Spleen (tissue), 13 donors: ENCODE measurements at regions of chr15 and their contacts with region 1.

Region 1: DNA sequence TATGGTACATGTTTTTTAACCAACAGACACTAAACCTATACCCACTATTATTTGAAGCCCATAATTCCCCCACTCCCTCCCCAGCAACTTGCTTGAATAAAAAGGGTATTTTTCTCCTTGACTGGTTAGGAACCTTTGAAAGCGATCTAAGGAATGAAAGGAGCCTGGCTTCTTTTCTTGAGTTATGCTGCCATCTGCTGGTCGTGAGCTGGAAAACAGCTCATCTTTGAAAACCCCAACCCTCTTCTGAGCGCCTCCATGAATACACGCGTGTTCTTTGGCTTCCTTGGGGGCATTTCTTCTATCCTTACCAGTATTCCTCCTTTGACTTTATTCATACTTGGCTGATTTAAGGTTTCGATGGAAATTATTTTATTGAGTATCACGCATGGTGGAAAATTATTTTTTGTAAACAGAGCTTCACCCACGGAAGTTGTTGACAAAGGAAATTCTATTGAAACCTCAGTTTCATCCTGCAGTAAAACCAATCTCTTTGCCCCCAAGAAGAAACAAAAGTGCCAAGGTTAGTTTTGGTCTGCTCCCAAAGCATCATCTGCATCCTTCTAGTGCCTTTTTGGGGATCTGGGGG is 171.6 kb downstream of the SV2B start:
- DNase-seq: no peak
- H3K4me3 ChIP-seq: no peak overlapping the region
- H3K27ac ChIP-seq: no peak overlapping the region
- H3K4me1 ChIP-seq: peaks cover 0 to 7% (median 6%) of the 10 kb centered on the region in 6 donors
- H3K27me3 ChIP-seq: peaks cover 0 to 34% (median 0%) of the 10 kb centered on the region in 7 donors
- CTCF ChIP-seq: peak; percentile 46 to 90 (median 79)
- POLR2A ChIP-seq: no peak

Region 2: GRCh38 chr15:90959894-90960293 is 311.8 kb before region 1 on chr15:
- intact Hi-C with region 1: loop called (anchors 10 kb)
- DNase-seq: no peak
- H3K4me3 ChIP-seq: no peak overlapping the region
- H3K27ac ChIP-seq: no peak overlapping the region
- H3K4me1 ChIP-seq: peaks cover 14 to 29% (median 24%) of the 10 kb centered on the region in 6 donors
- H3K27me3 ChIP-seq: no peaks in the 10 kb centered on the region
- CTCF ChIP-seq: no peak
- POLR2A ChIP-seq: no peak

Region 3: DNA sequence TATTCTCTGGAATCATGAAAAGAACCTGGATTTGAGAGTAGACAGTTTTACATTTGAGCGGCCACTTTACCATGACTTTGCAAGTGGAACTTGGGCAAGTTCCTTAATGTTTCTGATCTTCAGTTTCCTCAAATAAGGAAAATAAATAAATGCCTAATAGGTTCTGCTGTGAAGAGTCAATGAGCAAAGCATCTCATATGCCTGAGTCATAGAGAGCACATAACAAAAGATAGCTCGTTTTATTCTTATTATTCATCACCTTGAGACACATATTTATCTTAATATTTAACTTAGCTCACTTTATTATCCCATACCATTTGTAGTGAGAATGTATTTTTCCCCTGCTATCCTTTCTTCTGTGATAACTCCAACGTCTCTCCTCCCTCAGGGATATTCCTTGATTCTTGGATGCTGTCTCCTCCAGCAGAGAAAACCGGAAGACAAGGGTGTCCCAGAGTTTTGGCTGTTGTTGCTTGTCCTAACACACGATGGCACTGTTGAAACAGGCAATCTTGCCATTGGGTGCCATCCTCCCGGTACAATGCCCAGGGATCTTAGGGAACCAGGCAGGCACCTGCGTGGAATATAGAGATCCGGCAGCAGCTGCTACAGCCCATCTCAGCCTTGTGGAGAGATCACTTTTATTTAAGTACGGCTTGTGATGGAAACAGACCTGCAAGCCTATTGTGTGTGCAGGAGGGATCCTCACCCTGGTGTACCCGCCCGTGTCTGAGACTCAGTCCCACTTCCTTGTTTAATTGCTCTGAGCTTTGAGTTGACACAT is 215.9 kb before region 1 on chr15:
- intact Hi-C with region 1: loop called (anchors 5 kb)
- DNase-seq: no peak
- H3K4me3 ChIP-seq: no peak overlapping the region
- H3K27ac ChIP-seq: no peak overlapping the region
- H3K4me1 ChIP-seq: peaks cover 0 to 6% (median 0%) of the 10 kb centered on the region in 6 donors
- H3K27me3 ChIP-seq: peaks cover 0 to 82% (median 43%) of the 10 kb centered on the region in 7 donors
- CTCF ChIP-seq: peak in 10 of 11 experiments; percentile 19 to 74 (median 62)
- POLR2A ChIP-seq: no peak

Region 4: DNA sequence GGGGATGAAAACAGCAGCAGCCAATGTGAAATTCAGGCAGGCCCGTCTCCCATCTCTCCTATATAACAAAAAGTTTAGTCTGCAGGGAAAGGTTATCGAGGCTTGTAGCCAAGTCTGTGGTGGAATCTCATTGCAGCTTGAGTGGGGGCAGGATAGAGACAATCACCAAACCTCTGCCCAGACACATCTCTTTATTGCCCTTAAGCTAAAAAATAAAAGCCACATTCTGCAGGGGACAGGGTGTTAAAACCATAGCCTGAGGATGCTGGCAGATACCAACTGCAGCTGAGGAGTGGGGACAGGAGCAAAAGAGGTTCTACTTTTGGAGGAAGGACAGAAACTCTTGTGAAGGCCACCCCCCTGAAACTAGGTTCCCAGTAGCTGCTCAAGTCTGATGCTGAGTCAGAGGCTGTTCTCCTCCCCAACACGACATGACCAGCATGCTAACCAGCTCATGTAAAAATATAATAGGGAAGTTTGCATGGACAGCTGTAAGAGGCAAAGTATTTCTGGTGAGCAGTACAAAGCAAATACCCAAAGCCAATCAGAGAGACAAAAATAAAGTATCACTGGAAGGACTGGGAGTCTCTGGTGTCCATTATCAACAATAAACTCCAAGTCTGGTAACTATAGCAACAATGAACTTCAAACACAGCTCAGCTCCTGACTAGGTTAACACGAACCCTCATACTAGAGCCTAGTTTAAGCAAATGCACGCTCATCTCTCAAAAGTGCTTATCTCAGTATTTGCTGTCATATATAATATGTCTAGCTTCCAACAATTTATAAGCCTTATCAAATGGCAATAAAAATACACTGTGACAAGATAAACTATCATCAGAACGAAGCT is 219.7 kb after region 1 on chr15:
- intact Hi-C with region 1: no loop called
- DNase-seq: no peak
- H3K4me3 ChIP-seq: no peak overlapping the region
- H3K27ac ChIP-seq: no peak overlapping the region
- H3K4me1 ChIP-seq: no peaks in the 10 kb centered on the region
- H3K27me3 ChIP-seq: peaks cover 0 to 3% (median 0%) of the 10 kb centered on the region in 7 donors
- CTCF ChIP-seq: no peak
- POLR2A ChIP-seq: no peak